ENCODE measurements at regions of chr7 and their contacts with region 1.

Region 1: GRCh38 chr7:107168233-107169119 is at the start of gene HBP1:
- H3K4me3 ChIP-seq: peak within 1 kb of the TSS; percentile 91
- H3K27ac ChIP-seq: peak within 1 kb of the TSS; percentile 85
- H3K4me1 ChIP-seq: peaks cover 3% of the 10 kb centered on the region; the same call in 1 of the 2 replicates
- CTCF ChIP-seq: no peak

Region 2: DNA sequence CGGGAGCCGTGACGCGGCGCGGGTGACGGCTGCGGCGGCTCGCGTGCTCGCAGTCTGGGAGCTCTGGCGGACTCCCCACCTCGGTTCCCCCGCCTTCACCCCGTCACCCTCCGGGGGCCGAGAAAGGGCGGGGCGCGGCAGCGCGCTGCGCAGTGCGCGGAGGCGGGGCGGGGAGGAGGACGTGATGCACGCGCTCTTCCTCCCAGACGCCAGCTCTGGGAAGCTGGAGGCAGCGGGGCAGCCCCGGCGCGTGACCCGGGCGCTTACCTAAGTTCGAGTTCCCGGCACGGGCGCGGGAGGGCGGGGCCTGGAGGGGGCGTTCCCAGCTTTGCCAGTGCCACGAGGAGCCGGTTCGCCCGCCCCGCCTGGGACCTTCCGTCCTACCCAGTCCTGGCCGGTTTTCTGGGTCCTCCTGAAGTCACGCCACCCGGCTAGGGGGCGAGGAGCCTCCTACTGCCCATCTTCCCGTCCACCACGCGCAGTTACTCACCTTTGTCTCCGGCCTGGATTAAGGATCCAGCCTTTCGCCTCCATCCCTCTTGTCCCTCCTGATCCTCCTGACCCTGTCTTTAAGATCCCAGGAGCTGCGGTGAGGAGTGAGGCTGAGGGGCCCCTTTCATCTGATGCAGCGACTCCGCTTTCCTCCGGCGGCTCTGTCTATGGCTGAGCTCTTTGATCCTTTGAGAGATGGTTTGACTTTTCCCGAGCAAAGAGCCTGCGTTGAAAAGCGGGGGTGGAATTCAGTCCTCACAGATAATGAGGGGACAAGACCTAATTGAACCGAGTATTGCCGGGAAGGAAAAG is 883.2 kb before region 1 on chr7:
- CTCF ChIA-PET with region 1: no interaction called
- POLR2A ChIA-PET with region 1: interaction called, 11 read pairs
- H3K4me3 ChIP-seq: peak overlapping the region; percentile 86
- H3K27ac ChIP-seq: peak overlapping the region; percentile 82
- H3K4me1 ChIP-seq: peaks cover 5% of the 10 kb centered on the region; the same call in 1 of the 2 replicates
- CTCF ChIP-seq: no peak

Region 3: DNA sequence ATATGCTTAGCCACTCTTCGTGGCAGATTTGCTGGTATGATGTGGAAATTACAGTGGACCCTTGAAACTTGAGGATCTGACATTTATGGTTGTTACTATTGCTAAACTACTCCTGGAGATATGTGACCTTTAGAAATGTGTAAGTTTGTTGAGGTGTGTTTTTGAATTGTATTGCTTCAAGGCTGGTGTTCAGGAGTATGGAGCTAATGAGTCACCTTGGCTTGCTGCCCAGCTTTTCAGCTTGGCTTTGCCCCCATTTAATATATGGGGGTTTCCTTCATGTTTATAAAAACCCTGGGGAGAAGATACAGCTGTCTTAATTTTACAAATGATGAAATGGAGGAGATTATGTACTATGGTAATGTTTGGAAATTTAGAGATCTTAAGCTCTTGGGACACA is 11.9 kb after region 1 on chr7:
- CTCF ChIA-PET with region 1: interaction called, 3 read pairs
- POLR2A ChIA-PET with region 1: interaction called, 14 read pairs
- H3K4me3 ChIP-seq: no peak overlapping the region
- H3K27ac ChIP-seq: no peak overlapping the region
- H3K4me1 ChIP-seq: peaks cover 14% of the 10 kb centered on the region
- CTCF ChIP-seq: no peak

Region 4: DNA sequence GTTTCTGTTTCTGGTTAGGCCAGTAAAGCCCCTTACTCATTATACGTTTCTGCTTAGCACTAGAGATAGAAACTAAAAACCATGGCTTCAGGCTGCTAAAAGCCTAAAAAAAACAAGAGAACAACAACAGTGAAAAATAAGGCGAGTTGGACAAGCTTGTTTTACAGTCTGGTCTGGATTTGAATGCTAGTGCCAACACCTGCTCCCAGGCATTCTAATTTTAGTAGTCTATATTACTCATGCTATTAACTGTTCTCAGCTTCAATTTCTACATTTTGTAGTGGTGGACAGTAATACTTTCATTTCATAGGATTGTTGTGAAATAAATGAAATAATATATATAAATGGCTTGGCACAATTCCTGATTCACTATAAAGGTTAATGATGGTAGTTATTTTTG is 108.9 kb after region 1 on chr7:
- CTCF ChIA-PET with region 1: no interaction called
- POLR2A ChIA-PET with region 1: no interaction called
- H3K4me3 ChIP-seq: no peak overlapping the region
- H3K27ac ChIP-seq: no peak overlapping the region
- H3K4me1 ChIP-seq: no peaks in the 10 kb centered on the region
- CTCF ChIP-seq: no peak

Region 5: GRCh38 chr7:107743567-107744344 is 575.3 kb after region 1 on chr7 and contains the start of gene CBLL1:
- CTCF ChIA-PET with region 1: interaction called, 4 read pairs
- POLR2A ChIA-PET with region 1: interaction called, 10 read pairs
- H3K4me3 ChIP-seq: peak within 1 kb of the TSS; percentile 73
- H3K27ac ChIP-seq: peak within 1 kb of the TSS; percentile 82
- H3K4me1 ChIP-seq: peaks cover 2% of the 10 kb centered on the region; the same call in 1 of the 2 replicates
- CTCF ChIP-seq: peak; percentile 94

Measured in HEK293 (cell line).